Activated T-helper 2 cell treated with anti-CD3 and anti-CD28 coated beads, Interferon-gamma antibody, Interleukin-2, Interleukin-4, amounts not matched to agents 10 μg/mL and 5 μg/mL and 100 μg/mL, durations not matched to agents 14 hours and 24 hours and 36 hours (primary cell): ENCODE measurements at regions of chr9 and their contacts with region 1.

Region 1: DNA sequence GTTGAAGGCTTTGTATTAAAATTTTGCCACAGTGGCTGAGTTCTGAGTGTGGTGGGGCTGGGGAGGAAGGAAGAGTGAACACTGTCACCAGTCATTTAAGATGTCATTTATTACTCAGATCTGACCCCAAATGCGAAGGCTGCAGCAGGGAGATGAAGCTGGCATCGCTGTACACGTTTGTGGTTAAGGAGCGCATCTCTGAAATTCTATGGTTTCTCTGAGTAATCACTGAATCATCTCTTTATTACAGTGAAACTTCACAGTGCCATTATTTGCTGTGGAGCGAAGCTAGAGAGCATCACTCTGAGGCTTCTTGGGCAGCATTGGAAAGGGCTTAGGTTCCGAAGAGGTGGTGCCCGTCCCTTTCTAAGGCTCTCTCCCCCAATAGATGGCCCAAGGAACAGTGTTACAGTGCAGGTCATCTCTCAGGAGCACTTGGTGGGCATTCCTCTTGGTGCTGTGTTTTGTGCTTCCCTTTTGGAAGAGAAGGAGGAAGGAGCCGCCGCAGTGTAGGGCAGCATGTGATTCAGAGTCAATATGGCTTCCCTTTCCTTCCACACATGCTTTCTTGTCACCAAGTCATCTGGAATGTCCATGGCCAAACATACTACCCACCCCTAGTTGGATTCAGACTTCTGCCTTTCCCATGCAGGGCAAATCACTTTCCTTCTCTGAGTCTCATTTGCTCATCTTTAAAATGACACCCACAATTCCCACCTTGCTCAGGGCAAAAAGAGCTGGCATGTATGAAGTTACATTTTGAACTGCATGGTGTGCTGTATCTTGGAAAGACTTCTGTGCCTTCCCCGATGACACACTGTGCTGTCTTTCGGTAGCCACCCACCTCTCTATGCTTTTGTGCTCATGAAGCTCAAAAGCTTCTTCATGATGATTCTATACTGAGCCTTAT is 9.3 kb upstream of the TEX48 start:
- DNase-seq: peak; percentile 82
- H3K4me3 Mint-ChIP-seq: peak overlapping the region; percentile 43
- H3K27ac Mint-ChIP-seq: peak overlapping the region; percentile 98
- H3K4me1 Mint-ChIP-seq: peaks cover 93% of the 10 kb centered on the region
- H3K27me3 Mint-ChIP-seq: no peaks in the 10 kb centered on the region

Region 2: GRCh38 chr9:113511856-113512761 is 1179.2 kb before region 1 on chr9:
- intact Hi-C with region 1: loop called (anchors 10 kb)
- DNase-seq: peak; percentile 66
- H3K4me3 Mint-ChIP-seq: peak overlapping the region; percentile 54
- H3K27ac Mint-ChIP-seq: peak overlapping the region; percentile 96
- H3K4me1 Mint-ChIP-seq: peaks cover 56% of the 10 kb centered on the region
- H3K27me3 Mint-ChIP-seq: peaks cover 4% of the 10 kb centered on the region

Region 3: DNA sequence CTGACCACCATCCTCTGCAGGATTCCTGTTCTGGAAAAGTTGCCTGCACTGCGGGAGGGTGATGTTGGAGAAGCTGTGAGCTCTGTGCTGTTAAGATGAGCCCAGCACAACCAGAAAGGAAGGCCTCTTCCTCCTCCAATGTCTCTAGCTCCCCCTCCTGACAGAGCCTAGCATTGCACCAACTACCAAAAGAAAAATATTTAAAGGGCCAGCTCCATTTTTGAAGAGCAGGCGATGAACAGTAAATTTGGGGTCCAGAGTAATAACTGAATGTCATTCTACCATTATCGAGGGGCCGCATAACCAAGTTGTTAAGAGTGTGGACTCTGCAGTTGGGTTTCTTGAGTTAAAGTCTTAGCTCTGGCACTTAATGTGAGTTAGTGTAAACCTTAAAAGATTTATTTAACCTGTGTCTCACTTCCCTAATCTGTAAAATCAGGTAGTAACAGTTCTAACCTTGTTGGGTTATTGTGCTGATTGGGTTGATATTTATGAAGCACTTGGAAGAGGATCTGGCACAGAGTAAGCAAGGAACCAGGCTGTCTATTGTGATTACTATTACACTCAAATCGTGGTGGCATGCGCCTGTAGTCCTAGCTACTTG is 37.6 kb before region 1 on chr9:
- intact Hi-C with region 1: no loop called
- DNase-seq: peak; percentile 73
- H3K4me3 Mint-ChIP-seq: no peak overlapping the region
- H3K27ac Mint-ChIP-seq: no peak overlapping the region
- H3K4me1 Mint-ChIP-seq: peaks cover 21% of the 10 kb centered on the region
- H3K27me3 Mint-ChIP-seq: no peaks in the 10 kb centered on the region

Region 4: GRCh38 chr9:114738581-114739316 is 47.4 kb after region 1 on chr9:
- intact Hi-C with region 1: loop called (anchors 1 kb)
- DNase-seq: peak; percentile 62
- H3K4me3 Mint-ChIP-seq: no peak overlapping the region
- H3K27ac Mint-ChIP-seq: peak overlapping the region; percentile 83
- H3K4me1 Mint-ChIP-seq: peaks cover 50% of the 10 kb centered on the region
- H3K27me3 Mint-ChIP-seq: no peaks in the 10 kb centered on the region

Region 5: GRCh38 chr9:114906908-114907571 is 215.7 kb after region 1 on chr9:
- intact Hi-C with region 1: loop called (anchors 2 kb)
- DNase-seq: no peak
- H3K4me3 Mint-ChIP-seq: no peak overlapping the region
- H3K27ac Mint-ChIP-seq: peak overlapping the region; percentile 94
- H3K4me1 Mint-ChIP-seq: peaks cover 84% of the 10 kb centered on the region
- H3K27me3 Mint-ChIP-seq: no peaks in the 10 kb centered on the region

Region 6: DNA sequence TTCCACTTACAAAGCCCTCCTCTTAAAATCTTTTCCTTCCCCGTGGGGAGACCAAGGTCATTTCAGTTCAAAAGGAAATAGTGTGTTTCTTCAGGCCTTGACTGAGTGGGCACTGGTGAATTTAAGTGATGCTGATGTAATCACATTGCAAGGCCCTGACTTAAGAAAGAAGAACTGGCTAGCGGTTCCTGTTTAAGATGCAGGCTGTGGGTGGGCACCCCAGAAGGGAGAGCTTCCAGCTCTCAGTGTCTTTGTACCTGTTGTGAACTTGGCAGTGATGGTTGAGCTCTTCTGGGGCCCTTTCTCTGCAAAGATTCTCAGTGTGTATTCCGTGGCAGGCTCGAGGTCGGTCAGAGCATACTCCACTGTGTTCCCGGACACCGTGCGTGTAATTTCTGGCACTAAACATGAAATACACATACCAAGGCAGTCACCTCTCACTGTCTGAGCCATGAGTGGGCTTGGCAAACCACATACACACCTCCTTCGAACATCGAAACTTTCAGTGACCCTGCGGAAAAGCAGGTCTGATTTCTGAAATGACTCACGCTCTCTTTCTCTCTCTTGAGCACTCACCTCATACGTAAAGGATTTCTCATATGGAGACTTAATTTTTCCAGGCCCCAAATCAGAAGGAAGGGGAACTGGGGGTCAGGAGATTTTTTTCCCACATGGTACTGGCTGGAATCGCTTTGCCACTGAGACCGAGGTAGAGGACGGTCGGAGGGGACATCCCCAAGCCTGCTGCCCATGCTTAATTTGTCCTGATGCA is 344.7 kb after region 1 on chr9:
- intact Hi-C with region 1: loop called (anchors 1 kb)
- DNase-seq: peak; percentile 14
- H3K4me3 Mint-ChIP-seq: peak overlapping the region; percentile 41
- H3K27ac Mint-ChIP-seq: peak overlapping the region; percentile 89
- H3K4me1 Mint-ChIP-seq: peaks cover 45% of the 10 kb centered on the region
- H3K27me3 Mint-ChIP-seq: peaks cover 8% of the 10 kb centered on the region